ENCODE measurements at regions of chr9 and their contacts with region 1.

Region 1: GRCh38 chr9:98176391-98177259 is 15.8 kb downstream of the CORO2A start:
- DNase-seq: peak; percentile 62 to 65
- H3K4me3 ChIP-seq: no peak overlapping the region
- H3K4me3 Mint-ChIP-seq: peak overlapping the region; percentile 64
- H3K27ac Mint-ChIP-seq: peak overlapping the region; percentile 91
- H3K4me1 ChIP-seq: peaks cover 60% of the 10 kb centered on the region
- H3K4me1 Mint-ChIP-seq: peaks cover 45% of the 10 kb centered on the region
- H3K27me3 ChIP-seq: no peaks in the 10 kb centered on the region
- H3K27me3 Mint-ChIP-seq: no peaks in the 10 kb centered on the region
- CTCF ChIP-seq: no peak

Region 2: GRCh38 chr9:97982683-97983588 is 193.7 kb before region 1 on chr9 and contains the start of gene ANP32B:
- CTCF ChIA-PET with region 1: no interaction called
- POLR2A ChIA-PET with region 1: no interaction called
- intact Hi-C with region 1: no loop called
- DNase-seq: peak; percentile 95 to 96
- H3K4me3 ChIP-seq: peak within 1 kb of the TSS; percentile 96
- H3K4me3 Mint-ChIP-seq: peak within 1 kb of the TSS; percentile 79
- H3K27ac Mint-ChIP-seq: peak within 1 kb of the TSS; percentile 84
- H3K4me1 ChIP-seq: peaks cover 10% of the 10 kb centered on the region
- H3K4me1 Mint-ChIP-seq: peaks cover 28% of the 10 kb centered on the region
- H3K27me3 ChIP-seq: no peaks in the 10 kb centered on the region
- H3K27me3 Mint-ChIP-seq: no peaks in the 10 kb centered on the region
- CTCF ChIP-seq: peak; percentile 64 to 96
- total RNA-seq, gene ANP32B: 299 and 317 TPM in 2 replicates

Region 3: GRCh38 chr9:98146101-98146991 is 30.3 kb before region 1 on chr9:
- CTCF ChIA-PET with region 1: no interaction called
- POLR2A ChIA-PET with region 1: no interaction called
- intact Hi-C with region 1: loop called (anchors 2 kb)
- DNase-seq: peak; percentile 86 to 92
- H3K4me3 ChIP-seq: no peak overlapping the region
- H3K4me3 Mint-ChIP-seq: peak overlapping the region; percentile 25
- H3K27ac Mint-ChIP-seq: peak overlapping the region; percentile 78
- H3K4me1 ChIP-seq: peaks cover 40% of the 10 kb centered on the region
- H3K4me1 Mint-ChIP-seq: peaks cover 25% of the 10 kb centered on the region
- H3K27me3 ChIP-seq: no peaks in the 10 kb centered on the region
- H3K27me3 Mint-ChIP-seq: no peaks in the 10 kb centered on the region
- CTCF ChIP-seq: no peak

Measured in Caco-2 (cell line).